ENCODE measurements at regions of chr17 and their contacts with region 1.

Region 1: GRCh38 chr17:32877164-32877764 is 340 bp upstream of the MYO1D start:
- H3K4me3 ChIP-seq: peak overlapping the region; percentile 88
- H3K27ac ChIP-seq: peak overlapping the region; percentile 96; the same call in 1 of the 2 replicates
- H3K4me1 ChIP-seq: peaks cover 9% of the 10 kb centered on the region
- CTCF ChIP-seq: peak; percentile 53

Region 2: DNA sequence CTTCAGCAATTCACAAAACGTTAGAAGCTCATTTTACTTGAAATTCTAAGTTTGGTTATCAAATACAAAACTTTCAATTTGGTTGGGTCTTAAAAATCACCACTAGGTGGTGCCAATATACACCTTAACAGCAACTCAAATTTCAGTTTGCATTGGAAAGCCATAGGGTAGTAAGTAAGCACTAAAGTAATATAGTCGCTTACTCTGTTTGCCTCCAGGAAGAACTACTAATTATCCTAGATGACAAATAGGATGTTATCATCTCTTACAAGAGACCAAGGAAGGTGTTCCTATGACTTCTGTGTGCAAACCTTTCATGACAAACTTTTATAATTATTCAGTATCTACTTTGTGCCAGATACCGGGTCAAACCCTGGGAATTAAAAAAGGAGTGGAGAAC is 93.7 kb before region 1 on chr17:
- CTCF ChIA-PET with region 1: interaction called, 211 read pairs
- POLR2A ChIA-PET with region 1: interaction called, 4 read pairs
- H3K4me3 ChIP-seq: no peak overlapping the region
- H3K27ac ChIP-seq: no peak overlapping the region
- H3K4me1 ChIP-seq: no peaks in the 10 kb centered on the region
- CTCF ChIP-seq: no peak

Region 3: DNA sequence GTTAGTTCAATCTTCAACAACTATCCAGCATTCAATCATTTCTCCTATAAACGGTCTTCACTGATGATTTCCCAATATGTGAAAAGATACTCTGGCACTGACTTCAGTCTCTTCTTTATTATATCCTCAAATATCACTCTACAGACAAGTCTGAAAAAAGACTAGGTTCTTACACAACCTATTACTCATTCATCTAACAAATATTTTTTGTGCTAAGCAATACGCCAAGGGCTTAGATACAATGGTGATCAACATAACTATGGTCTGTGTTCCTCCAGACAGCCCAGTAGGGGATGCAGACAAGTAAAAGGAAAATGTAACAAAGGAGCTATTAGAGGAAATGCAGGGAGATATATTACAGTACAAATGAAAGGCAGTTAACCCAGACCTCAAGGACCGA is 64.2 kb before region 1 on chr17:
- CTCF ChIA-PET with region 1: interaction called, 21 read pairs
- POLR2A ChIA-PET with region 1: no interaction called
- H3K4me3 ChIP-seq: no peak overlapping the region
- H3K27ac ChIP-seq: no peak overlapping the region
- H3K4me1 ChIP-seq: no peaks in the 10 kb centered on the region
- CTCF ChIP-seq: no peak

Region 4: GRCh38 chr17:32859857-32860525 is 17.3 kb before region 1 on chr17:
- CTCF ChIA-PET with region 1: interaction called, 36 read pairs
- POLR2A ChIA-PET with region 1: interaction called, 4 read pairs
- H3K4me3 ChIP-seq: no peak overlapping the region
- H3K27ac ChIP-seq: no peak overlapping the region
- H3K4me1 ChIP-seq: peaks cover 24% of the 10 kb centered on the region
- CTCF ChIP-seq: no peak

Region 5: DNA sequence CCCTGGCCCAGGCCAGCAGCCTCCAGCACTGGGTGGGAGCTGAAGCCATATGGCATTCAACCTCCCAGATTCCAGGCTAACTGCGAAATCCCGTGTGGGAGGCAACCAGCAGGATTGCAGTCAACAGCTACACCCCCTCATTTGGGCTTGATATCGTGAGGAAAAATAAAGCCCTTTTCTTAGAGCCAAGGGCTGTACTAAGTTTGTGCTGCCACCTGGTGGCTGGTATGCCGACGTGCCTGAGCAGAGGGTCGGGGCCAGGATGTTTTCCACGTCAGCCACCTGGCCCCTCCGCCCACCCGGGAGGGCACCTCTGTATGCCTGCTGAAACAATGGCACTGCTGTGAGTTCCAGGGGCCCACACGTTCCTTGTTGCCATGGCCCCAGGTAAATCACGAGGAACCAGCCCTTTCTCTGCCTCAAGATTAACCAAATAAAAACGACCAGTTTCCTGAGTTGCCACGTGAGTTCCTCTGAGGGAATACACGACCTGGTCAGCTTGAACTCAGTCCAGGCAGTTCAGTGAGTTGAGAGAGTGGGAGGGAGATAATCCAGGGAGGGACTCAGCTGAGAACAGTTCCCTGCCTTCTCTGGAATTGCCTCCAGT is 59.7 kb after region 1 on chr17:
- CTCF ChIA-PET with region 1: interaction called, 15 read pairs
- POLR2A ChIA-PET with region 1: no interaction called
- H3K4me3 ChIP-seq: no peak overlapping the region
- H3K27ac ChIP-seq: no peak overlapping the region
- H3K4me1 ChIP-seq: no peaks in the 10 kb centered on the region
- CTCF ChIP-seq: peak; percentile 57

Measured in HEK293 (cell line).